Activated CD4-positive, alpha-beta memory T cell treated with anti-CD3 and anti-CD28 coated beads, Interleukin-2, amount 10 ng/mL, durations not matched to agents 7 days and 5 days (primary cell): ENCODE measurements at regions of chr17 and their contacts with region 1.

Region 1: GRCh38 chr17:58317421-58318064 is 11.1 kb downstream of the TSPOAP1 start:
- DNase-seq: peak; percentile 78
- H3K4me3 Mint-ChIP-seq: no peak overlapping the region
- H3K27ac Mint-ChIP-seq: peak overlapping the region; percentile 83
- H3K4me1 Mint-ChIP-seq: peaks cover 21% of the 10 kb centered on the region
- H3K27me3 Mint-ChIP-seq: no peaks in the 10 kb centered on the region

Region 2: GRCh38 chr17:58032691-58033415 is 284.7 kb before region 1 on chr17:
- CTCF ChIA-PET with region 1: no interaction called
- POLR2A ChIA-PET with region 1: no interaction called
- DNase-seq: no peak
- H3K4me3 Mint-ChIP-seq: no peak overlapping the region
- H3K27ac Mint-ChIP-seq: no peak overlapping the region
- H3K4me1 Mint-ChIP-seq: no peaks in the 10 kb centered on the region
- H3K27me3 Mint-ChIP-seq: peaks cover 22% of the 10 kb centered on the region

Region 3: DNA sequence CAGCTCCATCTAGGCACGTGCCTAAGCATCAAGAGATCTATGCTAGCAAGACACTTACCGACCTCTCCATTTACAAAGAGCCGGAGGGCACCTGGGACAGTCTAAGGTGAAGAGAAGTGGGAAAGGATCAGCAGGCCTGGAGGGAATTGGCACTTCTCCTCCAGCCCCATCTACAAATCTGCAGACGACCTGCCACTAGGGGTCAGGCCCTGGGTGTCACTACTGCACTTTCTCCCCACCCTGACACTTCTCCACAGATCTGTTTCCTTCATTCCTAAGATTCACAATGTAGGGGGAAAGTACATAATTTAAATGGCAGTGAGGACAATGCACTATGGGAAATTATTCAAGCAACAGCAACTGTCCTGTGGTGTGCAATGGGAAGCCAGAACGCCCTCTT is 106.6 kb before region 1 on chr17:
- CTCF ChIA-PET with region 1: no interaction called
- POLR2A ChIA-PET with region 1: no interaction called
- DNase-seq: no peak
- H3K4me3 Mint-ChIP-seq: no peak overlapping the region
- H3K27ac Mint-ChIP-seq: no peak overlapping the region
- H3K4me1 Mint-ChIP-seq: peaks cover 5% of the 10 kb centered on the region
- H3K27me3 Mint-ChIP-seq: no peaks in the 10 kb centered on the region

Region 4: GRCh38 chr17:58249270-58250133 is 68.0 kb before region 1 on chr17:
- CTCF ChIA-PET with region 1: interaction called, 10 read pairs
- POLR2A ChIA-PET with region 1: no interaction called
- DNase-seq: peak; percentile 73
- H3K4me3 Mint-ChIP-seq: peak overlapping the region; percentile 71
- H3K27ac Mint-ChIP-seq: no peak overlapping the region
- H3K4me1 Mint-ChIP-seq: peaks cover 19% of the 10 kb centered on the region
- H3K27me3 Mint-ChIP-seq: peaks cover 49% of the 10 kb centered on the region

Region 5: DNA sequence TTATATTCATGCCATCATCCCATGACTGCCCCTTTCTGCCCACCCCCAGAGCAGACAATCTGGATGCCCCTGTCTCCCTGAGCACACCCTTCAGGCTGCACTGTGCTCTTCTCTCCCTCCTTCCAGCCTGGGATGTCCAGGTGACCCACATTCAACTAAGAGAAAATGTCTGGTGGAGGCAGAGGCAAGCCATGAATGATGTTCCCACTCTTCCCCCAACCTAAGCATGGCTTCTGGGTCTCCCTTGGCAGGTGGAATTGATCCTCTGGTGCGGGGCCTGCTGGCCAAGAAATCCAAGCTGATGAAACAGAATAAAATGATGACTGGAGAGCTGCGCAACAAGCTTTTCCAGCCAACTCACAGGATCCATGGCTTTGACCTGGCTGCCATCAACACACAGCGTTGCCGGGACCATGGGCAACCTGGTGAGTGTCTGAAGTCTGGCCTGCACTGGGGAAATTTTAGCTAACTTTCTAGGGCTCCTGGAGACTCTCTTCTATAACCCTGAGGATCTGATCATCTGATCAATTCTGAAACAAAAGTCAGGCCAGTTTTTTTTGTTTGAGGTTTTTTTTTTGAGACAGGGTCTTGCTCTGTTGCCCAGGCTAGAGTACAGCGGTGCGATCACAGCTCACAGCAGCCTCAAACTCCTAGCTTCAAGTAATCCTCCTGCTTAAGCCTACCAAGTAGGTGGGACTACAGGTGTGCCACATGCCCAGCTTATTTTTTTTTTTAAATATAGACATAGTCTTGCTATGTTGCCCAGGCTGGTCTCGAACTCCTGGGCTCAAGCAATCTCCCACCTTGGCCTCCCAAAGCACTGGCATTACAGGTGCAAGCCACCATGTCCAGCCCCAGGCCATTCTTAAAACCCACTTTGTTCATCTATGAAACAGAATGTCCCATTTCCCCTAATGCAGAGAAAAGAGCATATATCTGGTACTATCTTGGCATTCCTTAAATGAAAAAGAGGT is 51.4 kb before region 1 on chr17:
- CTCF ChIA-PET with region 1: no interaction called
- POLR2A ChIA-PET with region 1: no interaction called
- DNase-seq: no peak
- H3K4me3 Mint-ChIP-seq: no peak overlapping the region
- H3K27ac Mint-ChIP-seq: no peak overlapping the region
- H3K4me1 Mint-ChIP-seq: no peaks in the 10 kb centered on the region
- H3K27me3 Mint-ChIP-seq: peaks cover 42% of the 10 kb centered on the region

Region 6: DNA sequence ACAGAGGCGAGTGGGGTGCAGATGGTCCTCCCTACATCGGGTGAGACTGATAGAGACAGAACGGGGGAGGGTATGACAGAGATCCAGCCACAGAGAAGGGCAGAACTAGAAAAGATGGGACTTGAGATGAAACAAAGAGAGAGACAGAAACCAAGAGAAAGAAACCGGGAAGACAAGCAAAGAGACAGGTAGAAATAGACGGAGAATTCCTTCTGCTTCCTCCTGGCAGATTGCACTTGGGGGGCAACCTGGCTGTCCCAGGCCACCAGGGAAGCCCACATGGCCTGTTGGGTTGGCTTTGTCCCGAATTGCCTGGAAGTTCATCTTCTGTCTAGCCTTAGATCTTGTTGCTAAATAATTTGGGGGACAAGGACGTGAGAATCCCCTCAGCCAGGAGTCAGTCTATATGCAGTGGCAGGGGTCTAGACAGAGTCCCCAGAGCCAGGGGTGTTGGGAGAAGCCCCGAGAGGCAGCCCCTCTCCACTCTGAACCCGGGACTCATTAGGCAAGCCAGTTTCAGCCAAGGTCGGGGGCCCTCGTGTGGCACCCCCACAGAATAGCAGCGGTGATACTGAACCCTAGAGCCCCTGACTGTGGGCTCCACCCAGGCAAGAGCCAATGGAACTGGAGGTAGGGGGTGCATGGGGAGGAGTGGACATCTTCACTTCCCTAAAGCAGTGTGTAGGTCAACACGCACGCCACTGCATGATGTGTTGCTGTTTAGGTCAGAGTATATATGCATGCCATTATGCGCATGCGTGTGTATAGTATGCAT is 11.7 kb after region 1 on chr17:
- CTCF ChIA-PET with region 1: interaction called, 31 read pairs
- POLR2A ChIA-PET with region 1: interaction called, 1,460 read pairs
- DNase-seq: peak; percentile 85
- H3K4me3 Mint-ChIP-seq: peak overlapping the region; percentile 98
- H3K27ac Mint-ChIP-seq: peak overlapping the region; percentile 99
- H3K4me1 Mint-ChIP-seq: peaks cover 37% of the 10 kb centered on the region
- H3K27me3 Mint-ChIP-seq: peaks cover 2% of the 10 kb centered on the region

Region 7: GRCh38 chr17:58344047-58344790 is 26.7 kb after region 1 on chr17:
- CTCF ChIA-PET with region 1: interaction called, 91 read pairs
- POLR2A ChIA-PET with region 1: interaction called, 1,460 read pairs
- DNase-seq: peak; percentile 92
- H3K4me3 Mint-ChIP-seq: peak overlapping the region; percentile 98
- H3K27ac Mint-ChIP-seq: peak overlapping the region; percentile 100
- H3K4me1 Mint-ChIP-seq: peaks cover 85% of the 10 kb centered on the region
- H3K27me3 Mint-ChIP-seq: no peaks in the 10 kb centered on the region

Region 8: GRCh38 chr17:58394534-58395223 is 77.1 kb after region 1 on chr17:
- CTCF ChIA-PET with region 1: no interaction called
- POLR2A ChIA-PET with region 1: no interaction called
- DNase-seq: no peak
- H3K4me3 Mint-ChIP-seq: no peak overlapping the region
- H3K27ac Mint-ChIP-seq: no peak overlapping the region
- H3K4me1 Mint-ChIP-seq: no peaks in the 10 kb centered on the region
- H3K27me3 Mint-ChIP-seq: peaks cover 2% of the 10 kb centered on the region

Region 9: DNA sequence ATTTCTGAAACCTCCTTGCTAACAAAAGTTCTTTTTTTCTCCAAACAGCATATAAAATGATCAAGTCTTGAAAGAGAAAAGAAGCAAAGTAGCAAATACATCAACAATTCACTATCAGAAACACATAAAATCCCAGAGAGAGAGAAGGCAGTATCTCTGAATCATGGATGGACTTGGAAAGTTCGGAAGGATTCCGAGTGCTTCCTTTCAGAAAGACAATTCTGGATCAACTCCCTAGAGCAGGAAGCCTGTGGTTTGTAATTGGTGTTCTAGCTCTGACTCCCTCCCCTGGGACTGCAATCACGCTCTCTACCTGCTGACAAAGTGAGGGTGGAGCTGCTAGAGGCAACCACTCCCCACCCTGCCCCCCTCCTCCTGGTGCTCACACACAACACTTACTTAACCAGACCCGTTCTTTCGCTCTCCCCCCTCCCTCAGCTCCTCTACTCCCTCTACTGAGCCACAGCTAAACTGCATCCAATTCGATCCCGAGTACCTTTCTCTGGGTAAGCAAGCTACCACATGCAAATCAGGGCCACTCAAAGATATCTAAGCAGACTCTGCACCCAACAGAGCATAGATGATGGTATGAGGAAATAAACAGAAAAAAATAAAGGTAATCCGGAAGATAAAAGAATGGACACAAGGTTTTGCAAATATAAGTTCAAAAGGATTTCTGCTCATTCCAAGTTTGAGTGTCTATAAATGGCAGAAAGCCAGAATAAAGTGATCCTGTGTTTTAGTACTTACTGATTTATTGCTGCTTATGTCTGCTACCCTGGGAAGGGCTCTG is 100.0 kb after region 1 on chr17 and contains the start of gene RNF43:
- CTCF ChIA-PET with region 1: interaction called, 55 read pairs
- POLR2A ChIA-PET with region 1: interaction called, 16 read pairs
- DNase-seq: peak; percentile 86
- H3K4me3 Mint-ChIP-seq: peak within 1 kb of the TSS; percentile 8
- H3K27ac Mint-ChIP-seq: peak within 1 kb of the TSS; percentile 10
- H3K4me1 Mint-ChIP-seq: peaks cover 31% of the 10 kb centered on the region
- H3K27me3 Mint-ChIP-seq: no peaks in the 10 kb centered on the region
- total RNA-seq, gene RNF43: not detected

Region 10: GRCh38 chr17:58487589-58488427 is 170.3 kb after region 1 on chr17 and contains the start of gene HSF5:
- CTCF ChIA-PET with region 1: interaction called, 10 read pairs
- POLR2A ChIA-PET with region 1: interaction called, 3 read pairs
- DNase-seq: peak; percentile 75
- H3K4me3 Mint-ChIP-seq: peak within 1 kb of the TSS; percentile 30
- H3K27ac Mint-ChIP-seq: no peak within 1 kb of the TSS
- H3K4me1 Mint-ChIP-seq: peaks cover 17% of the 10 kb centered on the region
- H3K27me3 Mint-ChIP-seq: no peaks in the 10 kb centered on the region
- total RNA-seq, gene HSF5: 0.40 to 0.70 TPM